ENCODE measurements at regions of chr7 and their contacts with region 1.

Region 1: GRCh38 chr7:19648791-19649190 is 60.0 kb downstream of the POLR1F start:
- DNase-seq: no peak
- CTCF ChIP-seq: no peak

Region 2: DNA sequence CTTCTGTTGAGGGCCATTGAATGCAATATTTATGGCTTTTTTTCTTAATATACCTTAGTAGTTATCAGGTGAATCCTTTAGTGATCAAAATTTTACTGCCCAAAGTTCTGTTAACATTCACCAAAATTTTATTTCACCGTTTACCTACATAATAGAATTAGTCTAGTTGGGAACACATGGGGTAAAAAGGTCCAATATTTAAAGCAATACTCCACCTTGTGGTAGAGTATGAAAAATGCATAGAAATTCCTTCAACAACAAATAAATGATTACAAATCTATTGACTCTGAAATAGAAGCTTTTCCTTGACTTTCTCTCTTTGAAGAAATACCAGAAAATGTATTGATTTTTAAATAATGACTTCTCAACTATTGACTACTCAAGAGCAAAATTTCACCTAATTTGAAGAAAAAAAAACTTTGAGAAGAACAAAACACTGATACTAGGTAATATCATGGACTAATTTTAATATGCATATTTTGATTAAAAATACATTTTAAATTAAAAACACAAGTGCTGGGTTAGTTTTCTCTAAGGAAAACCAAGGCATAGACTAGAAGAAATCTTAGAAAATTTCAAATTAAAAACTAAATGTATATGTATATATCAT is 16.7 kb after region 1 on chr7:
- CTCF ChIA-PET with region 1: interaction called, 10 read pairs
- POLR2A ChIA-PET with region 1: no interaction called
- DNase-seq: peak; percentile 21
- CTCF ChIP-seq: peak; percentile 24

Region 3: GRCh38 chr7:19692111-19692828 is 43.5 kb after region 1 on chr7:
- CTCF ChIA-PET with region 1: no interaction called
- POLR2A ChIA-PET with region 1: no interaction called
- DNase-seq: no peak
- CTCF ChIP-seq: no peak

Measured in GM10248 (cell line).